Activated T-helper 1 cell treated with anti-CD3 and anti-CD28 coated beads, Interleukin-12 subunit alpha, Interleukin-12 subunit beta, Interleukin-2, Interleukin-4 antibody, amounts not matched to agents 30 ng/mL and 10 ng/mL and 1 ng/mL, durations not matched to agents 14 hours and 24 hours and 36 hours (primary cell): ENCODE measurements at regions of chr10 and their contacts with region 1.

Region 1: GRCh38 chr10:32340596-32341180 is 6.3 kb downstream of the EPC1 start:
- DNase-seq: no peak
- H3K4me3 Mint-ChIP-seq: no peak overlapping the region
- H3K27ac Mint-ChIP-seq: peak overlapping the region; percentile 13
- H3K4me1 Mint-ChIP-seq: peaks cover 81% of the 10 kb centered on the region
- H3K27me3 Mint-ChIP-seq: no peaks in the 10 kb centered on the region

Region 2: GRCh38 chr10:31278279-31278941 is 1062.3 kb before region 1 on chr10:
- intact Hi-C with region 1: no loop called
- DNase-seq: no peak
- H3K4me3 Mint-ChIP-seq: no peak overlapping the region
- H3K27ac Mint-ChIP-seq: no peak overlapping the region
- H3K4me1 Mint-ChIP-seq: no peaks in the 10 kb centered on the region
- H3K27me3 Mint-ChIP-seq: peaks cover 3% of the 10 kb centered on the region

Region 3: GRCh38 chr10:32308027-32308603 is 32.6 kb before region 1 on chr10:
- intact Hi-C with region 1: loop called (anchors 5 kb)
- DNase-seq: no peak
- H3K4me3 Mint-ChIP-seq: no peak overlapping the region
- H3K27ac Mint-ChIP-seq: no peak overlapping the region
- H3K4me1 Mint-ChIP-seq: peaks cover 24% of the 10 kb centered on the region
- H3K27me3 Mint-ChIP-seq: no peaks in the 10 kb centered on the region